Panc1 (cell line): ENCODE measurements at regions of chr7 and their contacts with region 1.

Region 1: DNA sequence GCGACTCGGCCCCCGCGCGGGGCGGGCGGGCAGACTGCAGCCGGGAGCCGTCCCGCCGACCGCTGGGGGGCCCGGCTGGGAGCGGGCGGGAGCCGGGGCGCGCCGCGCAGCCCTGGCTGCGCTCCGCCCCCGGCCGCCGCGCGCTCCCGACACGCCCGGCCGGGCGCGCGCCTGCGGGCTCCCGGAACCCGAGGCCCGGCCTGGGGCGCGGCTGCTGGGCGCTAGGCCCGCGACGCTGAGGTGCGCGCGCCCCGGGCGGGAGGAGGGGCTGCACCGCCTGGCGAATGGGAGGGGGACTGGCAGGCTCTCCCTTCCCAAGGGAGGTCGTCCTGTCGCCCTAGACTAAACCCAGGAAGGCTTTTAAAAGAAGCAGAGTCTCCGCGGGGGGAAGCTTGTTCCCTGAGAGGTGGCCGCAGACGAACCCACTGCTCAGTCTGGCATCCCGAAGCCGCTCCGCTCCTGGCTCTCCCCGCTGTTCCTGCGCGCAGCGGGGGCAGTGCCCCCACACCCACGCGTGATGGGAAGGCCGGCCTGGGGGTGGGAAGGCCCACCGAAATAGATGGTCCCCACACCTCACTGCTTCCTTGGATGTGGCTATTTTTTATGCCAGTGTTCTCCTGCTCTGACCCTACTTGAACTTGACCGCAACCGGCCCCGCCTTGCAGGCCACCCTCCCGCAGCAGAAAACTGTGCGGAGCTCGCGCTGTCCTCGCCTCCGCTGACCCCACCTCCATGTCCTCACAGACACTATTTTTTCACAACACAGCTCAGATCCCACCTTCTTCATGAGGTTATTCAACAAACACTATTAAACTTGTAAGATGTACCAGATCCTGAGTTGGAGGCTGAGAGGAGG is at the start of gene VOPP1:
- DNase-seq: no peak
- ATAC-seq: peak; percentile 90
- H3K4me3 ChIP-seq: peak within 1 kb of the TSS; percentile 80 to 85
- H3K27ac ChIP-seq: peak within 1 kb of the TSS; percentile 94
- H3K4me1 ChIP-seq: peaks cover 38% of the 10 kb centered on the region
- H3K27me3 ChIP-seq: no peaks in the 10 kb centered on the region
- CTCF ChIP-seq: peak; percentile 52; the same call in 1 of the 2 replicates
- total RNA-seq, gene VOPP1: 131 TPM

Region 2: DNA sequence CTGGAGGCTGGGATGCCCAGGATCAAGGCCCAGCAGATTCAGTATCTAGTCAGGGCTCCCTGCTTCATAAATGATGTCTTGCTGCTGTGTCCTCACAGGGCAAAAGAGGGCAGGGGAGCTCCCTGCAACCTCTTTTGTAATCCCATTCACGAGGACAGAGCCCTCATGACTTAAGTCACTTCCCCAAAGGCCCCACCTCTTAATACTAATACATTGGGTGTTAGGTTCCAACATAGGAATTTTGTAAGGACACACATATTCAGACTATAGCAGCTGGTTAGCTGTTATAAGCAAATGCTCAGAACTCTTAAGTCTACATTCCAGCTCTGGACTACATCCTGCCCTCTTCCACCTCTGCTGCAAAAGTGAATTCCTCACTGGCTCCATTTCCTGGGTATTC is 63.3 kb before region 1 on chr7:
- CTCF ChIA-PET with region 1: no interaction called
- POLR2A ChIA-PET with region 1: no interaction called
- in situ Hi-C with region 1: no loop called
- intact Hi-C with region 1: no loop called
- DNase-seq: no peak
- ATAC-seq: no peak
- H3K4me3 ChIP-seq: no peak overlapping the region
- H3K27ac ChIP-seq: no peak overlapping the region
- H3K4me1 ChIP-seq: no peaks in the 10 kb centered on the region
- H3K27me3 ChIP-seq: no peaks in the 10 kb centered on the region
- CTCF ChIP-seq: no peak

Region 3: GRCh38 chr7:55951637-55952351 is 379.2 kb after region 1 on chr7 and contains the start of gene MRPS17:
- CTCF ChIA-PET with region 1: no interaction called
- POLR2A ChIA-PET with region 1: interaction called, 13 read pairs
- in situ Hi-C with region 1: no loop called
- intact Hi-C with region 1: no loop called
- DNase-seq: peak; percentile 61
- ATAC-seq: peak; percentile 100
- H3K4me3 ChIP-seq: peak within 1 kb of the TSS; percentile 85 to 97
- H3K27ac ChIP-seq: peak within 1 kb of the TSS; percentile 86
- H3K4me1 ChIP-seq: no peaks in the 10 kb centered on the region
- H3K27me3 ChIP-seq: no peaks in the 10 kb centered on the region
- CTCF ChIP-seq: no peak
- total RNA-seq, gene MRPS17: 28.9 TPM

Region 4: DNA sequence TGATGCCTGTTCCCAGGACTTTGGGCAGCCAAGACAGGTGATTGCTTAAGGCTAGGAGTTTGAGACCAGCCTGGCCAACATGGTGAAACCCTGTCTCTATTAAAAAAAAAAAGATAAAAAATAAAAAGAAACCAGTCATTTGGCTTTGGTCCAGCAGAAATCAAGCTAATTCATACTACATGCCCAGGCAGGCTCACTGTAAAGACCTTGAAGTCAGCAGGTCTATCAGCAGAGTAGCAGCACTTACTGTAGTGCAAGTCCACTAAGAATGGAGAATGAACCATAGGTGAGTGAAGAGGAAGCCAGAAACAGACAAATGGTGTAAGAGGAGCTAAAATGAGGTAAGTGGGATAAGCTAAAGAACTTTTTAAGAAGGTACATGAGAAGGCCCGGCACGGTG is 453.9 kb after region 1 on chr7:
- CTCF ChIA-PET with region 1: no interaction called
- POLR2A ChIA-PET with region 1: no interaction called
- in situ Hi-C with region 1: no loop called
- intact Hi-C with region 1: no loop called
- DNase-seq: no peak
- ATAC-seq: no peak
- H3K4me3 ChIP-seq: no peak overlapping the region
- H3K27ac ChIP-seq: no peak overlapping the region
- H3K4me1 ChIP-seq: no peaks in the 10 kb centered on the region
- H3K27me3 ChIP-seq: no peaks in the 10 kb centered on the region
- CTCF ChIP-seq: no peak